ENCODE measurements at regions of chr12 and their contacts with region 1.

Region 1: GRCh38 chr12:45803652-45804594 is 74.4 kb downstream of the ARID2 start:
- DNase-seq: no peak
- H3K4me3 ChIP-seq: no peak overlapping the region
- H3K27ac ChIP-seq: no peak overlapping the region
- H3K4me1 ChIP-seq: peaks cover 18% of the 10 kb centered on the region
- H3K27me3 ChIP-seq: no peaks in the 10 kb centered on the region
- CTCF ChIP-seq: no peak

Region 2: DNA sequence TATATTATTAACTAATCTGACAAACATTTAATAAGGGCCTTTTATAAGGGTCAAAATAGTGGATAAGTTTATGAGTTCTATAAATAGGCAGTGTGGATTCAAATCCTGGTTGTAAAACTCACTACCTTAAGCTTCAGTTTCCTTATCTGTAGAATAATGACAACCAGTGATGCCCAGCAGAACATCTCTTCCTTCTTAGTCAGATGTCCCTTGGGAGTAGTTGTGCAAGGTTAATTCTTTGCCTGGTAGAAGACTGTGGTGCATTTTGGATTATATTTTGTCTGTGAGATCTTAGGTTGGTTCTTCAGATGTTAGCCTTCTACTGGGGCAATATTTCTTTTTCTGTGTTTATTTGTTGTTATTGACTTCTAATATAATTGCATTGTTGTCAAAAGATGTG is 14.9 kb before region 1 on chr12:
- CTCF ChIA-PET with region 1: no interaction called
- POLR2A ChIA-PET with region 1: no interaction called
- intact Hi-C with region 1: loop called (anchors 2 kb)
- DNase-seq: peak; percentile 86
- H3K4me3 ChIP-seq: no peak overlapping the region
- H3K27ac ChIP-seq: no peak overlapping the region
- H3K4me1 ChIP-seq: peaks cover 11% of the 10 kb centered on the region
- H3K27me3 ChIP-seq: no peaks in the 10 kb centered on the region
- CTCF ChIP-seq: no peak

Region 3: GRCh38 chr12:45933504-45933903 is 129.6 kb after region 1 on chr12:
- CTCF ChIA-PET with region 1: no interaction called
- POLR2A ChIA-PET with region 1: no interaction called
- intact Hi-C with region 1: no loop called
- DNase-seq: peak; percentile 9
- H3K4me3 ChIP-seq: no peak overlapping the region
- H3K27ac ChIP-seq: peak overlapping the region; percentile 15
- H3K4me1 ChIP-seq: peaks cover 17% of the 10 kb centered on the region
- H3K27me3 ChIP-seq: no peaks in the 10 kb centered on the region
- CTCF ChIP-seq: no peak

Region 4: DNA sequence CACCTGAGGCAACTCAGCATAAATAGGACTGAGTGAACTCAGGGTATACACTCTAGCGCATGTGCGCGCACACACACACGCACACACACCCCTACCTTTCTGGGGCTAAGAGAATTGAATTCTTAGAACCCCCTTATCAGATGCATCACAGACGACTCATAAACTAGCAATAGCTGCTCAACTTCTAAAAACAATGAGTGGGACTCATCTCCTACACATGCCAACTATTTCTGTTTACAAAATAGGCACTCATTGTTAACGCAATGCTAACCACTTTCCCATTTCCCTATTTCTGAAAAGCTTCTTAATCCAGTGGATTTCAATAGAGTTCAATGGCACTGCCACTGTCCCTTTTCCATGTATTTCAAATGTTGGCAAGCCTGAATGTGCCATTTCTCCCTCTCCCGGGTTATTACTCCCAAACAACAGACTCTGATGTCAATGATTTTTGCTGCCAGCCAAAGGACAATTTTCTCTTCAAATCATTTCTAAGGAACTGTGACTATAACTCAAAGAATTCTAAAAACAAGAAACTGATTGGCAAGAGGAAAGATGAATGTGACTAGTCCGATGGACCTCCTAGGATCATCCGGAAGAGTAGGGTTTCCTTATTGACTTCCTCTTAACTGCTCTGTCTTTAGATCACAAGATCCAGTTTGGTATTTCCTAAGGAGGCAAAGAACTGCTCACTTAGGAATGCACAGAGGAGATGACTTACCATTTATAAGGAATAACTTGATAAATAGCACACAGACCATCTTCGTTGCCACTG is 416.1 kb after region 1 on chr12:
- CTCF ChIA-PET with region 1: no interaction called
- POLR2A ChIA-PET with region 1: no interaction called
- intact Hi-C with region 1: no loop called
- DNase-seq: peak; percentile 42
- H3K4me3 ChIP-seq: no peak overlapping the region
- H3K27ac ChIP-seq: peak overlapping the region; percentile 45
- H3K4me1 ChIP-seq: peaks cover 8% of the 10 kb centered on the region
- H3K27me3 ChIP-seq: no peaks in the 10 kb centered on the region
- CTCF ChIP-seq: no peak